WTC11 (cell line): ENCODE measurements at regions of chr11 and their contacts with region 1.

Region 1: DNA sequence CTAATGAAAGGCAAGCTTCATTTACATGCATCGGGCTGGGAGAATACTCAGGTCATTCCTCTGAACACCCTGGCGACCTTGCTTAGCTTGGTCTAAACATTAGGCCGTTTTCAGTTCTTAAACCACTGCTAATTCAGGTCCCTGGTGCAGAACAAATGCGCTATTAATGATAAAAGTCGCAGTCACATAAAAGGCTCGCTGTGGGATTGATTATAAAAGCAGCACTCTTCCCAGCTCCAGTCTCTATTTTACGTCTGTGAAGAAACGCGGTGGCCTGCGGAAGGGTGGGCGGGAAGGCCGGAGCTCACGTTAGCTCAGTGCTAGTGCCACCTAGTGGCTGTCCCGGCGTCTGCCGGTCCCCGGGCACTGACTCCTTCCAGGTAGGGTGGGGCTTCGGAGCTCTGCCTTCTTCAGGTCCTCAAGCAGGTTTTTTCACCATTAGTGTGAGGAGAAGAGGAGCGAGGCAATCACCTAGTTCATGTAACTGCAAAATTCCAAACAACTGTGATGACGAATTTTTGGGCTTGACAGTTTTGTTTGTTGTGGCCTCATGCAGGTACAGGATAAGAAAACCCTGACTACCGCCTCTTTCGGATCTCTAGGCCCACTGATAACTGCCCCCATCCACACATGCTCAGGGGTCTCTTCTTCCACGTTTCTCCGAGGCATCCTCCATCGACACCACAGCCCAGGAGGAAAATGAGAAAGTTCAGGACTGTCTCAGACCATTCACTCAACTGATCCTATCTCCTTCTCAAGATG is 66.5 kb upstream of the CLMP start:
- DNase-seq: peak; percentile 93
- ATAC-seq: peak; percentile 98
- H3K4me3 Mint-ChIP-seq: peak overlapping the region; percentile 44
- H3K27ac Mint-ChIP-seq: no peak overlapping the region
- H3K4me1 Mint-ChIP-seq: peaks cover 7% of the 10 kb centered on the region; the same call in 1 of the 2 replicates
- H3K27me3 Mint-ChIP-seq: peaks cover 33% of the 10 kb centered on the region
- CTCF ChIP-seq: peak; percentile 87

Region 2: DNA sequence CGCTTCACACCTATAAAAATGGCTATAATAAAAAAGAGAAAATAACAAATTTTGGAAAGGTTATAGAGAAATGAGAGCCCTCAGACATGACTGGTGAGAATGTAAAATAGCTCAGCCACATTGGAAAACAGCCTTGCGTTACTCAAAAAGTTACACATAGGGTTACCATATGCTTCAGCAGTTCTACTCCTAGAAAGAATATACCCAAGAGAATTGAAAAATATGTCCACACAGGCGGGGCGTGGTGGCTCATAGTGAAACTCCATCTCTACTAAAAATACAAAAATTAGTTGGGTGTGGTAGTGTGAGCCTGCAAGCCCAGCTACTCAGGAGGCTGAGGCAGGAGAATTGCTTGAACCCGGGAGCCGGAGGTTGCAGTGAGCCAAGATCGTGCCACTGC is 386.5 kb before region 1 on chr11:
- CTCF ChIA-PET with region 1: no interaction called
- POLR2A ChIA-PET with region 1: no interaction called
- DNase-seq: no peak
- ATAC-seq: no peak
- H3K4me3 Mint-ChIP-seq: no peak overlapping the region
- H3K27ac Mint-ChIP-seq: no peak overlapping the region
- H3K4me1 Mint-ChIP-seq: peaks cover 9% of the 10 kb centered on the region
- H3K27me3 Mint-ChIP-seq: no peaks in the 10 kb centered on the region
- CTCF ChIP-seq: no peak

Region 3: GRCh38 chr11:123054301-123055065 is 207.0 kb before region 1 on chr11:
- CTCF ChIA-PET with region 1: interaction called, 25 read pairs
- POLR2A ChIA-PET with region 1: no interaction called
- DNase-seq: no peak
- ATAC-seq: peak; percentile 62
- H3K4me3 Mint-ChIP-seq: no peak overlapping the region
- H3K27ac Mint-ChIP-seq: peak overlapping the region; percentile 82
- H3K4me1 Mint-ChIP-seq: peaks cover 21% of the 10 kb centered on the region
- H3K27me3 Mint-ChIP-seq: no peaks in the 10 kb centered on the region
- CTCF ChIP-seq: peak; percentile 52; the same call in 1 of the 2 replicates

Region 4: GRCh38 chr11:123110356-123110755 is 151.2 kb before region 1 on chr11:
- CTCF ChIA-PET with region 1: interaction called, 113 read pairs
- POLR2A ChIA-PET with region 1: no interaction called
- DNase-seq: no peak
- ATAC-seq: no peak
- H3K4me3 Mint-ChIP-seq: no peak overlapping the region
- H3K27ac Mint-ChIP-seq: no peak overlapping the region
- H3K4me1 Mint-ChIP-seq: peaks cover 3% of the 10 kb centered on the region
- H3K27me3 Mint-ChIP-seq: no peaks in the 10 kb centered on the region
- CTCF ChIP-seq: no peak

Region 5: GRCh38 chr11:123166071-123166559 is 95.4 kb before region 1 on chr11:
- CTCF ChIA-PET with region 1: interaction called, 13 read pairs
- POLR2A ChIA-PET with region 1: no interaction called
- DNase-seq: peak; percentile 80
- ATAC-seq: peak; percentile 93
- H3K4me3 Mint-ChIP-seq: no peak overlapping the region
- H3K27ac Mint-ChIP-seq: no peak overlapping the region
- H3K4me1 Mint-ChIP-seq: peaks cover 46% of the 10 kb centered on the region
- H3K27me3 Mint-ChIP-seq: no peaks in the 10 kb centered on the region; the same call in 1 of the 2 replicates
- CTCF ChIP-seq: peak; percentile 59

Region 6: GRCh38 chr11:123235117-123235655 is 26.3 kb before region 1 on chr11:
- CTCF ChIA-PET with region 1: interaction called, 25 read pairs
- POLR2A ChIA-PET with region 1: no interaction called
- DNase-seq: peak; percentile 75
- ATAC-seq: peak; percentile 93
- H3K4me3 Mint-ChIP-seq: no peak overlapping the region
- H3K27ac Mint-ChIP-seq: no peak overlapping the region
- H3K4me1 Mint-ChIP-seq: peaks cover 7% of the 10 kb centered on the region; the same call in 1 of the 2 replicates
- H3K27me3 Mint-ChIP-seq: peaks cover 3% of the 10 kb centered on the region; the same call in 1 of the 2 replicates
- CTCF ChIP-seq: peak; percentile 58

Region 7: DNA sequence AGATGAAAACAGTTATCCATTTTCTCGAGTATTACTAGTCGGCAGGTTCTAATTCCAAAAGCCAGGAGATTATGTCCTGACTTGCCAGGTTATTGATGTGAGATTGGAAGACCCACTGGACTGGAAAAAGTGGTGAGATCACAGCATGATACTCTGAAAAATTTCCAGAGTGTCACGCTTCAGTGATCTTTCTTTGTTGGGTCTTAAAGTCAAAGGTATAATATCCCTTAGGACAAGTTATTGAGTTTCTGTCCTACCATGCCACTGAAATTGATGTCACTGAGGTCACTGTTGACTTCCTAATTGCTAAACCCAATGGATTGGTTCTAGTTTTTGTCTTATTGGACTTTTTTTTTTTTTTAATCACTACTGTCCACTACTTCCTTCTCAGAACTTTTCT is 64.0 kb after region 1 on chr11:
- CTCF ChIA-PET with region 1: no interaction called
- POLR2A ChIA-PET with region 1: no interaction called
- DNase-seq: no peak
- ATAC-seq: no peak
- H3K4me3 Mint-ChIP-seq: no peak overlapping the region
- H3K27ac Mint-ChIP-seq: no peak overlapping the region
- H3K4me1 Mint-ChIP-seq: peaks cover 4% of the 10 kb centered on the region
- H3K27me3 Mint-ChIP-seq: no peaks in the 10 kb centered on the region
- CTCF ChIP-seq: no peak

Region 8: DNA sequence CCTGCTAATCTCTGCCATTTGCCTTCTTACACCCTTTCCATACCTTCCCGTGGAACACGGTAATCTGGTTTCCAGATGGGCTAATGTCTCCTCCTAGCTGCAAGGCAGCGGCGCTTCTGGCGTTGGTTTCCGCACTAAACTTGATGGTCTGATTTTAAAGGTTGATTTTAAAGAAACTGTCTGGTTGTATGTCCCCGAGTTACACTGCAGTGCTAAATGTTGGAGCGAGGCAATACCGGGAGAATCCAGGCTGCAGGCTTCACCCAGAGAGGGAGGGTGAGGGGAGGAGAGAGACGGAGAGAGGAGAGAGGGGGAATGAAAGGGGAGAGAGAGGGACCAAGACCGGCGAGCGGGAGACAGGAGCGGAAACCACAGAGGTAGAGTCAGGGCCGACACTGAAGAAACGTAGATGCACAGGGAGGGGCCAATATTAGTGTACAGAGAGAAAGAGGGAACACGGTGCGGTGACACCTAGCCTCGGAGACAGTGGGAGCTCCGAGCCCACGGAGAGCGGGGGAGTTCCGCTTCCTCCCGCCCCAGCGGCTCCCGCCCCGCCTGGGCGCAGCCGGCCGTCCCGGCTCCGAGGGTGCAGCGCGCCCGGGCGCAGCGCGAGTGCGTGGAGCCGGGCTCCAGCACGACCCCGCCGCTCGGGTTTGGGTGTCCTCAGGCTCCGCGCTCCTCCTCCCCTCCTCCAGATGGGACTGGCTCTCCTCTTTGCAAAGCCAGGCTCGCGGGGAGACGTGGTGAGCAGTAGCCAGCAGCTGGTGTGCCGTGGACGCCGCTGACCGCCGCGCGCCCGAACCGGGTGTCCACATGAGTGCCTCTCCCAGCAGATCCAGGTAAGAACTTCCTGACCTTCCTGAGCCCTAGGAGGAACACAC is 96.7 kb after region 1 on chr11:
- CTCF ChIA-PET with region 1: interaction called, 14 read pairs
- POLR2A ChIA-PET with region 1: no interaction called
- DNase-seq: peak; percentile 38
- ATAC-seq: peak; percentile 92
- H3K4me3 Mint-ChIP-seq: peak overlapping the region; percentile 85
- H3K27ac Mint-ChIP-seq: no peak overlapping the region
- H3K4me1 Mint-ChIP-seq: peaks cover 12% of the 10 kb centered on the region
- H3K27me3 Mint-ChIP-seq: peaks cover 67% of the 10 kb centered on the region
- CTCF ChIP-seq: no peak

Region 9: DNA sequence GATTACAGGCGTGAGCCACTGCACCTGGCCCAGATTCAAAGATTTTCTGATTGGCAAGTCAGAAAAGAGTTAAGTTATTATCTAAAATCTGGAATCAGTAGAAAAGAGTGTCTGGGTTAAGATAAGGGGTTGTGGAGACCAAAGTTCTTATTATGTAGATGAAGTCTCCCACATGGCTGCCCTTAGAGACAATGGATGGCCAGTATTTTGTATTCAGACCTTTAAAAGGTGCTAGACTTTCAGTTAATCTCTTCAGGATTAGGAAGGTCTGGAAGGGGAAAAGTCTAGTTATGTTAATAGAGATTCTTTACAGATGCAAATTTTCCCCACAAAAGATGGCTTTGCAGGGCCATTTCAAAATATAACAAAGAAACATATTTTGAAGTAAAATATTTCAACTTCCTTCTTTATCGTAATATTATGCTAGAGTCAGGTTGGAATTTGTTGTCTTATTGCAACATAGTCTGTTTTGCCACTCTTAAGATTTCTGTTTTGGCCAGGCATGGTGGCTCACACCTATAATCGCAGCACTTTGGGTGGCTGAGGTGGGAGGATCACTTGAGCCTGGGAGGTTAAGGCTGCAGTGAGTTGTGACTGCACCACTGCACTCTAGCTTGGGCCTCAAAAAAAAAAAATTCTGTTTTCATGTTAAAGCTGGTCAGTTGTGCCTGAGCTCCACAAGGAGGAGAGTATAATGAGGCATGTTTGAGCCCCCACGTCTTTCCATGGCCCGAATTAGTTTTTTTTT is 182.5 kb after region 1 on chr11:
- CTCF ChIA-PET with region 1: no interaction called
- POLR2A ChIA-PET with region 1: no interaction called
- DNase-seq: no peak
- ATAC-seq: peak; percentile 59
- H3K4me3 Mint-ChIP-seq: no peak overlapping the region
- H3K27ac Mint-ChIP-seq: peak overlapping the region; percentile 84; the same call in 1 of the 2 replicates
- H3K4me1 Mint-ChIP-seq: peaks cover 31% of the 10 kb centered on the region
- H3K27me3 Mint-ChIP-seq: no peaks in the 10 kb centered on the region
- CTCF ChIP-seq: no peak

Region 10: GRCh38 chr11:123547180-123547579 is 285.7 kb after region 1 on chr11:
- CTCF ChIA-PET with region 1: no interaction called
- POLR2A ChIA-PET with region 1: no interaction called
- DNase-seq: no peak
- ATAC-seq: no peak
- H3K4me3 Mint-ChIP-seq: no peak overlapping the region
- H3K27ac Mint-ChIP-seq: no peak overlapping the region
- H3K4me1 Mint-ChIP-seq: peaks cover 34% of the 10 kb centered on the region
- H3K27me3 Mint-ChIP-seq: no peaks in the 10 kb centered on the region
- CTCF ChIP-seq: no peak